Spleen (tissue), 13 donors: ENCODE measurements at regions of chr6 and their contacts with region 1.

Region 1: DNA sequence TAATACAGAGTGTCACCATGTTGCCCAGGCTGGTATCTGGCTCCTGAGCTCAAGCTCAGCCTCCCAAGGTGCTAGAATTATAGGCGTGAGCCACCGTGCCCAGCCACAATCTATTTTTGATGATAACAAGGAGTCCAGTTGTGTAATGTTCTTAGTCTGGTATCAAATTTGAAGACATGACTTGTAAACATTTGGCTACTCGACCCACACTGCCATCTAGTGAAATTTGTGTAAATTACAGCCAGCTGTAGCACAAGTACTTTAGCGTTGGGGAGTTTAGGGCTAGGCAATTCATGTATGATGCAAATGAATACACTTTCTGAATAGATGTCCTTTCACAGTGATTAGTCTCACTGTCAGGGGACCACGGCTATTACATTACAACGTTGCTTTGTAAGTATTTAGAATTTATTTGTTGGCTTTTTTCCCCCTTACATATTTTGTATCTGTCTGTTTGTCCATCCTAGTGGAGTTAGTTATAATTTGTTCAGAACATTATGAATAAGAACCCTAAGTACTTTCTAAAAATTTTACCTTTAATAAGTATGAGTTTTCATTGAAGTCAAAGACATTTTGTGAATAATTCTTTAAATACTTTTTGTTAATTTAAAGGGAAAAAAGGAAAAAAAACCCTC is 139.7 kb downstream of the PRDM13 start:
- DNase-seq: no peak
- H3K4me3 ChIP-seq: no peak overlapping the region
- H3K27ac ChIP-seq: no peak overlapping the region
- H3K4me1 ChIP-seq: no peaks in the 10 kb centered on the region
- H3K27me3 ChIP-seq: peaks cover 0 to 23% (median 0%) of the 10 kb centered on the region in 7 donors
- CTCF ChIP-seq: peak; percentile 61 to 86 (median 79)
- POLR2A ChIP-seq: no peak

Region 2: GRCh38 chr6:99467509-99468106 is 278.8 kb before region 1 on chr6:
- intact Hi-C with region 1: loop called (anchors 2 kb)
- DNase-seq: no peak
- H3K4me3 ChIP-seq: no peak overlapping the region
- H3K27ac ChIP-seq: no peak overlapping the region
- H3K4me1 ChIP-seq: no peaks in the 10 kb centered on the region
- H3K27me3 ChIP-seq: no peaks in the 10 kb centered on the region
- CTCF ChIP-seq: peak; percentile 31 to 75 (median 59)
- POLR2A ChIP-seq: no peak

Region 3: GRCh38 chr6:99590728-99591672 is 155.4 kb before region 1 on chr6:
- intact Hi-C with region 1: loop called (anchors 10 kb)
- DNase-seq: peak; percentile 69
- H3K4me3 ChIP-seq: peak overlapping the region in 5 of 8 donors; percentile 6 to 58 (median 12)
- H3K27ac ChIP-seq: no peak overlapping the region
- H3K4me1 ChIP-seq: peaks cover 16 to 39% (median 31%) of the 10 kb centered on the region in 6 donors
- H3K27me3 ChIP-seq: peaks cover 11 to 85% (median 76%) of the 10 kb centered on the region in 7 donors
- CTCF ChIP-seq: no peak
- POLR2A ChIP-seq: no peak

Region 4: DNA sequence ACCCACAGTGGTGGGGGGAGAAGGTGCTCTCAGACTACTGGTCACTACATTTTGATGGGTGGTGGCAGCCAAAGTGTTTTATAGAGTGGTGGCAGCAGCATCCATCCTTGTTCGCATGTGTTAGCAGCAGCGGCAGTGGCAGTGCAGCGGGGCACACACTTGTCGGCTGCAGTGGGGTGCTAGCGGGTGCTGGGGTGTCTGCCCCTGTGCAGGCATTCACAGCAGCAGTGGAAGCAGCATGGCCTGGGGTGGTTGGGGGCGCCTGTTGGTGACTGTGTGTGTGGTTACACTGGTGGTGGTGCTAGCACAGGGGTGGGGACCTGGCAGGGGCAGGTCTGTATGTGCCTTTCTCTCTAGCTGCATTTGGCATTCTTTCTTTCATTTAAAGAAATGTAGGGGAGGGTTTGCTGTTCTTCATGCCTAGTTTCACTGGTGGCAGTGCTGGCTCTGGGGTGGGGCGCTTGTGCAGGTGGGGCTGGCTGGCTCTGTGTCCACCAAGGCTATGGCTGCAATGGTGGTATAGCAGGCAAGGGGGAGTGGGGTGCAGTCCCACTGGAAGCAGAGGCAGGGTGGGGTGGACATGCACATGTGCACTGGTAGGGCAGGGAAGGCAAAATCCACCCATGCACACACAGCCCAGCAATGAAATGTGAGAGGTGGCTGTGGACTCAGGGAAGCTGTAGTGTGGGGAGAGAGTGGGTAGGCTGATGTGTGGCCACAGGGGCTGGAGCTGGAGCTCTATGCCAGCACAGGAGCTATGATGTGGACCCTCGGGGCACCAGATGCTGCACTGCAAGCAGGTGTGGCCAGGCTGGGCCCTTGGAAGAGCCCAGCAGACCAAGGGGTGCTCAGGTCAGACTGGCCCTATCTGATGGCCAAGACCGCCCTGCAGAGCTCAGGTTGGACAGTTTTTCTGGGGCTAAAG is 33.5 kb after region 1 on chr6:
- intact Hi-C with region 1: no loop called
- DNase-seq: no peak
- H3K4me3 ChIP-seq: no peak overlapping the region
- H3K27ac ChIP-seq: no peak overlapping the region
- H3K4me1 ChIP-seq: no peaks in the 10 kb centered on the region
- H3K27me3 ChIP-seq: peaks cover 0 to 18% (median 0%) of the 10 kb centered on the region in 7 donors
- CTCF ChIP-seq: no peak
- POLR2A ChIP-seq: no peak